ENCODE measurements at regions of chr21 and their contacts with region 1.

Region 1: GRCh38 chr21:26967062-26967913 is at the start of gene ADAMTS5:
- DNase-seq: peak; percentile 5
- H3K4me3 ChIP-seq: peak within 1 kb of the TSS; percentile 33 to 40
- H3K27ac ChIP-seq: peak within 1 kb of the TSS; percentile 42 to 66
- H3K4me1 ChIP-seq: no peaks in the 10 kb centered on the region
- H3K27me3 ChIP-seq: peaks cover 6% of the 10 kb centered on the region
- CTCF ChIP-seq: no peak
- POLR2A ChIP-seq: no peak
- total RNA-seq, gene ADAMTS5: 3.0 TPM

Region 2: GRCh38 chr21:27168084-27168483 is 200.8 kb after region 1 on chr21:
- intact Hi-C with region 1: no loop called
- DNase-seq: no peak
- H3K4me3 ChIP-seq: no peak overlapping the region
- H3K27ac ChIP-seq: no peak overlapping the region
- H3K4me1 ChIP-seq: no peaks in the 10 kb centered on the region
- H3K27me3 ChIP-seq: no peaks in the 10 kb centered on the region
- CTCF ChIP-seq: no peak
- POLR2A ChIP-seq: no peak

Region 3: GRCh38 chr21:27802816-27803475 is 835.7 kb after region 1 on chr21:
- intact Hi-C with region 1: loop called (anchors 5 kb)
- DNase-seq: peak; percentile 12
- H3K4me3 ChIP-seq: no peak overlapping the region
- H3K27ac ChIP-seq: no peak overlapping the region
- H3K4me1 ChIP-seq: no peaks in the 10 kb centered on the region
- H3K27me3 ChIP-seq: no peaks in the 10 kb centered on the region
- CTCF ChIP-seq: peak in 3 of 4 experiments; percentile 31 to 49 (median 47)
- POLR2A ChIP-seq: no peak